Activated CD8-positive, alpha-beta memory T cell treated with anti-CD3 and anti-CD28 coated beads, Interleukin-2, amount 10 ng/mL, durations not matched to agents 7 days and 5 days (primary cell): ENCODE measurements at regions of chr22 and their contacts with region 1.

Region 1: GRCh38 chr22:29302681-29303465 is 3.6 kb upstream of the GAS2L1 start:
- DNase-seq: no peak
- ATAC-seq: no peak
- H3K4me3 Mint-ChIP-seq: no peak overlapping the region
- H3K27ac Mint-ChIP-seq: no peak overlapping the region
- H3K4me1 Mint-ChIP-seq: peaks cover 12% of the 10 kb centered on the region
- H3K27me3 Mint-ChIP-seq: peaks cover 9% of the 10 kb centered on the region

Region 2: DNA sequence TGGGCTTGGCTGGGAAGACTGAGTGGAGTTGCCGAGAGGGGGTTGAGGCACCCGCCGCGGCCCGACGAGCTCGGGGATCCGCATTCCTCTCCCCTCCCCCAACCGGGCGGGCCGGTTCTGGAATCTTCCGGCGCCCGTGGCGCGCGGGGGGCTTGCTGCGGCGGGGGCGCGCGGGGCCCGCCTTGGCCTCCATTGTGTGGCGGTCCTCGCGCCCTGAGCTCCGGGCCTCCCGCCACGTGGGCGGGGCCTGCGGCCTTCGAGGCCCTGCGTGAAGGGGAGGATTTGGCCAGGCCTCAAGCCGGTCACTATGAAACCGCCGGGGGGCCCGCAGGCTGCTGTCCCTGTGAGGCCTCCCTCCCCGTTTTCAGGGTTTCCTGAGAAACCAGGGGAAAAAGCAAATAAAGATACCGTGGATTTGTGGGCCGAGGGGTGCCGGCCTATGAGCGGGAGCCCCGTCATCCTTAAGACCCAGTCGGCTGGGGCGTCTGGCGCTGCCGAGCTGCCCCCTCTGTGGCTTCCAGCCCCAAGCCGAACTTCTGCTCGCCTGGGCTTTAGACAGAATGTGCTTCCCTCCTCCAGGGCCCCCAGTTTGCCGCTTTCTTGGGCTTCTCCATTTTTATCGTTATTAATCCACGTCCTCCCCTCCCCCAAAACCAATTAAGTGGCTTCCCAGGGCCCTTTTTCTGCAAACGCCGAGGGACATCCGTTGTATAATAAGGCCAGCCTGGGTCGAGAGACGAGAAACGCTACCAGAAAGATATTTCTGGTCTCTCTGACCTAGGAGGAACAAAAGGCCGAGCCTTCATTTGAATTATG is 34.2 kb before region 1 on chr22:
- CTCF ChIA-PET with region 1: no interaction called
- DNase-seq: peak; percentile 61
- ATAC-seq: peak; percentile 26
- H3K4me3 Mint-ChIP-seq: peak overlapping the region; percentile 91
- H3K27ac Mint-ChIP-seq: peak overlapping the region; percentile 100
- H3K4me1 Mint-ChIP-seq: peaks cover 49% of the 10 kb centered on the region
- H3K27me3 Mint-ChIP-seq: no peaks in the 10 kb centered on the region

Region 3: GRCh38 chr22:29313121-29313580 is 10.3 kb after region 1 on chr22:
- CTCF ChIA-PET with region 1: interaction called, 10 read pairs
- DNase-seq: no peak
- ATAC-seq: peak; percentile 29
- H3K4me3 Mint-ChIP-seq: no peak overlapping the region
- H3K27ac Mint-ChIP-seq: no peak overlapping the region
- H3K4me1 Mint-ChIP-seq: peaks cover 47% of the 10 kb centered on the region
- H3K27me3 Mint-ChIP-seq: peaks cover 49% of the 10 kb centered on the region